ENCODE measurements at regions of chr20 and their contacts with region 1.

Region 1: DNA sequence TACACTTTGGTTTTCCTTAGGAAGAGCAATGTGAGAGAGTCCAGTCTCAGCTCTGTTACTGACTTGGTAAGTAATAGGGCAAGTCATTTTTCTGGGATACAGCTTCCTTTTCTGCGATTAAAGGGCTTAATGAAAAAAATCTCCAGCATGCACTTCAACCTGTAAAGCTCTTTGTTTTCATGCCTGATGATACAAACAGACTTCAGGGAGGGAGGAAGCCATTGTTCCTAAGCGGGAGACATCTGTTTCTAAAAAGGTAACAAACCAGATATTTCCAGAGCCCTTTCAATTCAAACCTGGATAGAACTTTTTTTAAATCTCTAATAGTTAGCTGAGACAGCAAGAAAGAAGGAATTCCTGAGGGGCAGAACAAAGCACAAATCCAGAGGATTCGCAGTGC is 5.2 kb upstream of the CASS4 start:
- DNase-seq: no peak
- ATAC-seq: peak in 1 of 4 donors; percentile 66
- H3K4me3 ChIP-seq: no peak overlapping the region
- H3K27ac ChIP-seq: peak overlapping the region in 11 of 12 donors; percentile 19 to 82 (median 60)
- H3K4me1 ChIP-seq: peaks cover 0 to 49% (median 17%) of the 10 kb centered on the region in 12 donors
- H3K27me3 ChIP-seq: no peaks in the 10 kb centered on the region
- CTCF ChIP-seq: no peak
- POLR2A ChIP-seq: no peak

Region 2: GRCh38 chr20:55375920-55376319 is 1031.0 kb before region 1 on chr20:
- intact Hi-C with region 1: no loop called
- DNase-seq: no peak
- ATAC-seq: no peak
- H3K4me3 ChIP-seq: no peak overlapping the region
- H3K27ac ChIP-seq: no peak overlapping the region
- H3K4me1 ChIP-seq: no peaks in the 10 kb centered on the region
- H3K27me3 ChIP-seq: no peaks in the 10 kb centered on the region
- CTCF ChIP-seq: no peak
- POLR2A ChIP-seq: no peak

Region 3: GRCh38 chr20:56422076-56422823 is 15.3 kb after region 1 on chr20:
- intact Hi-C with region 1: loop called in 1 of 10 experiments (anchors 1 kb)
- DNase-seq: peak in 1 of 5 donors; percentile 14
- ATAC-seq: peak in 2 of 4 donors; percentile 15 to 43
- H3K4me3 ChIP-seq: no peak overlapping the region
- H3K27ac ChIP-seq: peak overlapping the region in 10 of 12 donors; percentile 6 to 77 (median 46)
- H3K4me1 ChIP-seq: peaks cover 0 to 72% (median 24%) of the 10 kb centered on the region in 12 donors
- H3K27me3 ChIP-seq: no peaks in the 10 kb centered on the region
- CTCF ChIP-seq: no peak
- POLR2A ChIP-seq: no peak

Region 4: GRCh38 chr20:56468316-56469082 is 61.6 kb after region 1 on chr20 and contains the start of gene RTF2:
- intact Hi-C with region 1: loop called in 2 of 10 experiments (anchors 2 to 5 kb)
- DNase-seq: peak; percentile 94 to 97 (median 96)
- ATAC-seq: peak; percentile 97 to 100 (median 100)
- H3K4me3 ChIP-seq: peak within 1 kb of the TSS; percentile 46 to 94 (median 84)
- H3K27ac ChIP-seq: peak within 1 kb of the TSS; percentile 38 to 91 (median 82)
- H3K4me1 ChIP-seq: peaks cover 0 to 48% (median 21%) of the 10 kb centered on the region in 12 donors
- H3K27me3 ChIP-seq: no peaks in the 10 kb centered on the region
- CTCF ChIP-seq: no peak
- POLR2A ChIP-seq: peak in 1 of 2 donors; percentile 50
- total RNA-seq, gene RTF2: 61.9 to 101 (median 86.2) TPM